ENCODE measurements at regions of chr2 and their contacts with region 1.

Region 1: DNA sequence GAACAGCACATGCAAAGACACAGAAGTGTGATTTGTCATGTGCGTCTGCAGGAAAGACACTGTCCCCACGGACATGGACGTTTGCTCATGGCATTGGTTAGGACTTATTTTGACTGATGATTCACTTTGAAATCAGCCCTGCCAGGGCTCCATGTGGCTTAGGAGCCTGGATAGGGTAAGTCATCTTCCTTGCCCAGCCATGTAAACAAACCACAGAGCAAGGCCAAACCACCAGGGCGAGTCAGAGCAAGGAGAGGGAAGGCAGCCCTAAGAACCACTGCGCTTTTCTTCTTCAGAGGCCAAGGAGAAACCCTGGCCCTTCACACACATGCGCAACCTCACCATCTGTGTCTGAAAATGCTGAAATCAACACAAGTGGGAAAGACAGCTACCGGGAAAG is 88.8 kb downstream of the GFPT1 start:
- DNase-seq: no peak
- H3K4me3 ChIP-seq: no peak overlapping the region
- H3K4me1 ChIP-seq: no peaks in the 10 kb centered on the region
- H3K27me3 ChIP-seq: no peaks in the 10 kb centered on the region

Region 2: GRCh38 chr2:68943581-68944568 is 354.4 kb before region 1 on chr2:
- in situ Hi-C with region 1: loop called (anchors 5 kb)
- DNase-seq: peak; percentile 51 to 73
- H3K4me3 ChIP-seq: no peak overlapping the region
- H3K4me1 ChIP-seq: no peaks in the 10 kb centered on the region; the same call in none of the 2 replicates
- H3K27me3 ChIP-seq: peaks cover 7% of the 10 kb centered on the region; the same call in 1 of the 2 replicates

Region 3: DNA sequence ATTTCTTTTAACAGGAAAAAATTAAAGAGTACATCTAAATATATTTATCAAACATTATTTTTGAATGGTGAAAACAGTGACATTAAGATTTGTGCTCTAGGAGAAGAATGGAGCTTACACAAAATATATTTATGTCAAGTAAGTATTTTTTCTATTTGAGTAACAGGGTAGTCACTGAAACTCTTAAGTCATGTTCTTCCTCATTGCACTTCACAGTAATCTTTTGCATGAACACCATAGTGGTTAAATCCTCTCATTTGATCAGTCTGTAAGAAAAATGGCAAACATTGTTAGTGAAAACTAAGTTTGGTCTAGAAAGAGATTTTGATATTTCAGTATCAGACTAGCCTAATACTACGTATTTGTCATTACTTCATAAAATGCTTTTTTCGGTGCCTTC is 539.3 kb after region 1 on chr2:
- in situ Hi-C with region 1: no loop called
- DNase-seq: no peak
- H3K4me3 ChIP-seq: no peak overlapping the region
- H3K4me1 ChIP-seq: peaks cover 9% of the 10 kb centered on the region
- H3K27me3 ChIP-seq: no peaks in the 10 kb centered on the region

Measured in HAP-1 (cell line).